A673 (cell line): ENCODE measurements at regions of chr9 and their contacts with region 1.

Region 1: GRCh38 chr9:85667374-85667773 is 74.4 kb downstream of the AGTPBP1 start:
- DNase-seq: no peak
- H3K4me3 ChIP-seq: no peak overlapping the region
- H3K27ac ChIP-seq: no peak overlapping the region
- H3K4me1 ChIP-seq: peaks cover 8% of the 10 kb centered on the region
- H3K27me3 ChIP-seq: no peaks in the 10 kb centered on the region
- CTCF ChIP-seq: no peak

Region 2: GRCh38 chr9:85554349-85554748 is 113.0 kb before region 1 on chr9:
- CTCF ChIA-PET with region 1: no interaction called
- POLR2A ChIA-PET with region 1: no interaction called
- intact Hi-C with region 1: no loop called
- DNase-seq: no peak
- H3K4me3 ChIP-seq: no peak overlapping the region
- H3K27ac ChIP-seq: no peak overlapping the region
- H3K4me1 ChIP-seq: no peaks in the 10 kb centered on the region
- H3K27me3 ChIP-seq: no peaks in the 10 kb centered on the region
- CTCF ChIP-seq: no peak

Region 3: DNA sequence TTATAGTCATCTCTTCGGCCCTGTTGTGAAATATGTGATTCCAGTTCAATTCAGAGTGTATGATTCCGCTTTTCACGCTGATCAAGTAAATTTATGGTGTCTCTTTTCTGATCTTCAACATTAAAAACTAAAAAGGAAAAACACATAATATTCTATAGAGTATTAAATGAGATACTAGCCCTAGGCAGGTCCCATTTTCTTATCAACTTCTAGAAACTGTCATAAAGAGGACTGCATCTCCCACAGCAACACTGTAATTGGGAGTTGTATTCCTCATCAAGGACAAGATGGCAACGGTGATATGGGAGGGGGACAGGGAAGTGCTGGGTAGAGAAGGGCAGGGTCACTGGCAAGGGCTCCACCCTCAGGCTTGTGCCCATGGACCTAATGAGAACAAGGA is 360.4 kb after region 1 on chr9:
- CTCF ChIA-PET with region 1: interaction called, 12 read pairs
- POLR2A ChIA-PET with region 1: no interaction called
- intact Hi-C with region 1: no loop called
- DNase-seq: no peak
- H3K4me3 ChIP-seq: no peak overlapping the region
- H3K27ac ChIP-seq: no peak overlapping the region
- H3K4me1 ChIP-seq: no peaks in the 10 kb centered on the region
- H3K27me3 ChIP-seq: no peaks in the 10 kb centered on the region
- CTCF ChIP-seq: no peak